Activated CD4-positive, alpha-beta memory T cell treated with anti-CD3 and anti-CD28 coated beads, Interleukin-2, amount 10 ng/mL, durations not matched to agents 7 days and 5 days (primary cell): ENCODE measurements at regions of chr12 and their contacts with region 1.

Region 1: DNA sequence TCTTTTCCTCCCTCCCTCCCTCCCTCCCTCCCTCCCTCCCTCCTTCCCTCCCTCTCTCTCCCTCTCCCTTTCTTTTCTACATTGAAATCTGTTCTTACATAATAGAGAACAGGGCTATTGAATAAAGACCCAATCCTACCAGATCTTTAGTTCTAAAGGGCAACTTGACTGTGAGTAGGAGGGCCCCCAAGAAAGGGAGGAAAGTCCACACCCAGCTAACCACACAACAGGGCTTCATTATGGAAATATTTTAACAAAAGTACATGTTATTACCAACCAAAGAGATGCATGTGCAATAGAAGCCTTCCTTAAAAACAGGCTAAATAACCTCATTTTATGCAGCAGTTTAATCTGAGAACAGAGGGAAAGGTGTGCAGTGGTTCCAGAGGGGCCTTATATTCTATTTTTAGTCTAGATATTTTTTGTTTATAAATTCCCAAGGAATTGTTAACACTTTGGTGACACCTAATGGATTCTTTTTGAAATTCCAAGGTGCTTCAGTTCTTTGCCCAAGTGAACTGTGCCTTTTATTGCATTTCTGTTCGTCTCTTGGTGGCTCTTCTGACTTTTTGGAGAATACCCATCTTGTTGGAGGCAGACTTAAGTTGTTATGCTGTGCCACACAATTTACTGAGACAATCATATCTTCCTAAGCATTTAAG is 63.0 kb downstream of the GNS start:
- DNase-seq: no peak
- H3K4me3 Mint-ChIP-seq: no peak overlapping the region
- H3K27ac Mint-ChIP-seq: peak overlapping the region; percentile 7
- H3K4me1 Mint-ChIP-seq: peaks cover 69% of the 10 kb centered on the region
- H3K27me3 Mint-ChIP-seq: no peaks in the 10 kb centered on the region

Region 2: DNA sequence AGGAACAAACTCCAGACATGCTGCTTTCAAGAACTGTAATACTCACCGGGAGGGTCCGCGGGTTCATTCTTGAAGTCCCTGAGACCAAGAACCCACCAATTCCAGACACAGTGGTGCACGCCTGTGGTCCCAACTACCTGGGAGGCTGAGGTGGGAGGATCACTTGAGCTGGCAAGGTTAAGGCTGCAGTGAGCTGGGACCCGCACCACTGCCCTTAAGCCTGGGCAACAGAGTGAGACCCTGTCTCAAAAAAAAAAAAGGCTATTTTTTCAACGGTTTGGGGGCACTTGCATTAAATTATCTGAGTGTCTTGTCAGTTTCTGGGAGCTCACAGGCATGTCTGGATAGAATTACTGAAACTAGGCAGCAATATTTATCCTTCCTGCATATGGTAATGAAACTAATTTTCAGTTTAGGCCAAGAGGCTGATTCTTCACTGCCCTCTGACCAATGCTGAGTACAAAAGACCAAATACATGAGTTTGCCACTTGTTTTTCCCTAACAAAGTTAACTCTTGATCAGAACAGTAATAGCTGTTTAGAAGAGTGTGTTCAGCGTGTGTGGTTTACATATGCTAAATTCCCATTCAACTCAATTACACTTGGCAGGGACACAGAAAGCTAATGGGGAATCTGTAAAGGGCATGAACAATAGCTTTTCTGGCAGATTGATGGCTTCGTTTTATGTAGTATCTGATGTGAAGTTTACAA is 151.7 kb before region 1 on chr12:
- CTCF ChIA-PET with region 1: interaction called, 118 read pairs
- POLR2A ChIA-PET with region 1: interaction called, 6 read pairs
- DNase-seq: no peak
- H3K4me3 Mint-ChIP-seq: no peak overlapping the region
- H3K27ac Mint-ChIP-seq: no peak overlapping the region
- H3K4me1 Mint-ChIP-seq: no peaks in the 10 kb centered on the region
- H3K27me3 Mint-ChIP-seq: peaks cover 12% of the 10 kb centered on the region

Region 3: GRCh38 chr12:64610149-64610678 is 86.0 kb before region 1 on chr12 and contains the start of gene RASSF3:
- CTCF ChIA-PET with region 1: interaction called, 29 read pairs
- POLR2A ChIA-PET with region 1: interaction called, 18 read pairs
- DNase-seq: peak; percentile 84
- H3K4me3 Mint-ChIP-seq: peak within 1 kb of the TSS; percentile 95
- H3K27ac Mint-ChIP-seq: peak within 1 kb of the TSS; percentile 99
- H3K4me1 Mint-ChIP-seq: peaks cover 40% of the 10 kb centered on the region
- H3K27me3 Mint-ChIP-seq: no peaks in the 10 kb centered on the region
- total RNA-seq, gene RASSF3: 81.3 to 83.7 TPM

Region 4: DNA sequence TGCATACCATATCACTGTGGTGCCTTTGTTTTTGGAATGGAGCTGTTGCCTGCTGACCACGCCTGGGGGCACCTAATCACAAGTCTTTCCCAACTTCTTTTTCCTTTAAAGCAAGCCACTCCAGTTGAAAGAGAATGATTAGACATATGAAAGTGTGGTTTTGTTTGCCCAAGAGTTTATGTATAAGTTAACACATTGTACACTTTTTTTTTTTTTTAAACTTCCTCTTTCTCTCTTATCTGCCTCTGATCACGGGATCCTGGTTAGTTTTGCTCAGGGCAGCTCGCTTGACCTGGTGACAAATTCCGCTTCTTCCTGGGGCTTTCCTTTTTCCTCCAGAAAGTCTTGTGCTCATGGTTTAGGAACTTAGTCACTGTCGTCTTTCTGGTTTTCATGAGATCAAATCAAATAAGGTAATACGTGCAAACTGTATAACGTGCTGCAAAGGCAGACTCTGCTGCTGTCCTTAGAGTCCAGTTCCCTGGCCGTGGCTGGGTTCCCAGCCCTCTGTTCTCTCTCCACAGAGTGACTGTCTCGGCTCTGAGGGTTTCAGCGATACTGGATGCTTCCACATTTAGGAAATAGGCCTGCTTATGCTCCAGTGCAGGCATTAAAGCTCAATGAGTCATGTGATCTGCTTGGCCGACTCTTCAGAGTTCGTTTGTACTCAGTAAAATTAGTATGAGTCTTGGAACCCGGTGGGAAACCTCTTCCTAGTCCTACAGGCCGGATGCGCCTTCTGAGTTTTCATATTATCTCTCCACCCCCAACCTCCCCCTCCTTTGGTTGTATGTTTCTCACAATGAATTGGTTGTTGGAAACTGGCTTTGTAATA is 70.8 kb before region 1 on chr12:
- CTCF ChIA-PET with region 1: interaction called, 10 read pairs
- POLR2A ChIA-PET with region 1: no interaction called
- DNase-seq: peak; percentile 24
- H3K4me3 Mint-ChIP-seq: peak overlapping the region; percentile 40
- H3K27ac Mint-ChIP-seq: peak overlapping the region; percentile 75
- H3K4me1 Mint-ChIP-seq: peaks cover 41% of the 10 kb centered on the region
- H3K27me3 Mint-ChIP-seq: no peaks in the 10 kb centered on the region

Region 5: DNA sequence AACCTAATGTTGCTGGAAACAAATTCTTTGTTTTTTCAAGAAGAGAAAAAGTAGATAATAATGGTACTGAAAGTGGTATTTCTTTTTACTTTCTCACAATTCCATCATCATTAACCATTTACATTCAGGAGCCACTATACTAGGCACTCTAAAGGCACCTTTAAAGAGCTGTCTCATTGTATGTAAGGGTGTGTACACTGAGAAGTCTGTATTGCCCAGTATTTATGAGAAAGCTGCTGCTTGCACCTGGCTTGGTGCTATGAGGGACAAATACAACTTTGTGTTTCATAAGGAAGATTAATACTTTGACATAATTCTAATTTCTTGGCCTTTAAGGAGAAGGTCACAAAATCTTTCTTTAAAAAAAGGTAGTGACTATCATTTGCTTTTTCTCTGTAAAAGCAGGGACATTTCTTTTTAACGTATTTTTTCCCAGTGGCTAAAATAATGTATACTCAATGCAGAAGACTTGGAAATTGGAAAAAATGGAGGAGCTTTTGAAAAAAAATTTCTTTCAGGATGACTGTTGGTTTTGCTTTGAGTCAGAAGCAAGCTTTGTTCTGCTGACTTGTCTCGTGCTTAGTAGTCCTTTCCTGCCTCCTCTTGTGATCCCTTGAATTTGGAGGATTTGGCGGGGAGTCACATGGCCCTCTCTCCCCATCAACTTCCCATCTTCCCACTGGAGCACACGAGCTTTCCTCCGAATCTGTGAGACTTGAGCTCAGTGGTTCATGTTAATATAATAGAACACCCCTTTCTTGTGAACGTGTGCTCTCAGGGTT is 35.8 kb before region 1 on chr12:
- CTCF ChIA-PET with region 1: interaction called, 10 read pairs
- POLR2A ChIA-PET with region 1: interaction called, 5 read pairs
- DNase-seq: no peak
- H3K4me3 Mint-ChIP-seq: no peak overlapping the region
- H3K27ac Mint-ChIP-seq: peak overlapping the region; percentile 61
- H3K4me1 Mint-ChIP-seq: peaks cover 72% of the 10 kb centered on the region
- H3K27me3 Mint-ChIP-seq: no peaks in the 10 kb centered on the region

Region 6: GRCh38 chr12:64679487-64679983 is 16.7 kb before region 1 on chr12:
- CTCF ChIA-PET with region 1: interaction called, 66 read pairs
- POLR2A ChIA-PET with region 1: interaction called, 26 read pairs
- DNase-seq: peak; percentile 73
- H3K4me3 Mint-ChIP-seq: peak overlapping the region; percentile 62
- H3K27ac Mint-ChIP-seq: peak overlapping the region; percentile 95
- H3K4me1 Mint-ChIP-seq: peaks cover 95% of the 10 kb centered on the region
- H3K27me3 Mint-ChIP-seq: no peaks in the 10 kb centered on the region